ENCODE measurements at regions of chr18 and their contacts with region 1.

Region 1: GRCh38 chr18:13375302-13376255 is 157.0 kb downstream of the LDLRAD4 start:
- DNase-seq: peak; percentile 80
- H3K4me3 Mint-ChIP-seq: peak overlapping the region; percentile 74
- H3K27ac Mint-ChIP-seq: peak overlapping the region; percentile 95
- H3K4me1 Mint-ChIP-seq: peaks cover 78% of the 10 kb centered on the region
- H3K27me3 Mint-ChIP-seq: peaks cover 4% of the 10 kb centered on the region

Region 2: DNA sequence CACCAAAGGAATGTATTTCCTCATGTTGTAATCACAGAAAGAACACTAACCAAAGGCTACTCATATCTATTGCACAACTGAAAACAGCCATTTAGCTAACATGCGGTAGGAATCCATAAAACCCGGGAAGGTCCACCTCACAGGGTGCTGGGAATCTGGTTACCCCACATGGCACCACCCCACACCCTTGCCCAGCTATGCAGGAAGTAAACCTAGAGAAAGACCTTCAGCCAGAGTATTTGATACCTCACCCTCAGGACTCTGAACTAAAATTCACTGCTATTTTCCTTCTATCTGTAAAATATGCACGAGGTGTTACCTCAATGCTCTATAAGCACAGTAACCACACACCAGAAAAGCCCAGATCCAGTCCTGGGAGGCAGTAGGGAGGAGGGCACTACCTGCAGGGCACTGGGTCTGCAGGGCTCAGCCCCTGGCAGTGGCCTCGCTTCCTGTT is 537.4 kb before region 1 on chr18:
- intact Hi-C with region 1: loop called (anchors 1 kb)
- DNase-seq: peak; percentile 16
- H3K4me3 Mint-ChIP-seq: peak overlapping the region; percentile 78
- H3K27ac Mint-ChIP-seq: peak overlapping the region; percentile 92
- H3K4me1 Mint-ChIP-seq: peaks cover 78% of the 10 kb centered on the region
- H3K27me3 Mint-ChIP-seq: no peaks in the 10 kb centered on the region

Region 3: DNA sequence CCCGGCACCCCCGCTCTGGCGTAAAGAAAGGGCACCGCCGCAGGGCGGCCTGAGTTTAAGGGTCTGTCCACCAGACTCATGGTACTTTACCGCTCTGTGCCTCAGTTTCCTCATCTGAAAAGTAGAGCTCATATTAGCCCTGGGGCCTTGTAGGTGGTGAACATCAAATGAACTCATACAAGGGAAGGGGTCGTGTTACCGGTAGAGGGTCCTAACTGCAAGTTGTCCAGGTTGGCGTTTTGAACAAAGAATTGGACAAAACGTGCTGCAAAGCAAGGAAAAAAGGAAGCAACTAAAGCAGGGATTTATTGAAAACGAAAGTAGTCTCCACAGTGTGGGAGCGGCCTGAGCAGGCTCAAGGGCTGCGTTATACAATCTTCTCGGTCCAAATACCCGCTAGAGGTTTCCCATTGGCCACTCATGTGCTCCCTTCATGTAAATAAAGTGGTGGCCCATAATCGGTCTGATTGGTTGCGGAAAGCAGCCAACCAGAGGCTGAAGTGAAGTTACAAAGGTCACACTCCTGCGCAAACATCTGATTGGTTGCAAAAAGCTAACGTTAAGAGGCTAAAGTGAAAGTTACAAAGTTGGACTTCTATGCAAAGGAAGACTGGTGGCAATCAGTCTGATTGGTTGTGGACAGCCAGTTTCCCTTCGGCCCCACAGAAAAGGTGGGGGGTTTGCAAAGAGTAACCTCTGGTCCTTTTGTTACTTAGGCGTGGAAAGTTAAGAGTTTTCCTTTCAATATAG is 237.7 kb before region 1 on chr18:
- intact Hi-C with region 1: loop called (anchors 5 kb)
- DNase-seq: peak; percentile 76
- H3K4me3 Mint-ChIP-seq: peak overlapping the region; percentile 91
- H3K27ac Mint-ChIP-seq: peak overlapping the region; percentile 79
- H3K4me1 Mint-ChIP-seq: peaks cover 21% of the 10 kb centered on the region
- H3K27me3 Mint-ChIP-seq: peaks cover 11% of the 10 kb centered on the region

Region 4: GRCh38 chr18:13359210-13359609 is 16.4 kb before region 1 on chr18:
- intact Hi-C with region 1: loop called (anchors 2 kb)
- DNase-seq: no peak
- H3K4me3 Mint-ChIP-seq: no peak overlapping the region
- H3K27ac Mint-ChIP-seq: no peak overlapping the region
- H3K4me1 Mint-ChIP-seq: peaks cover 4% of the 10 kb centered on the region
- H3K27me3 Mint-ChIP-seq: no peaks in the 10 kb centered on the region

Region 5: GRCh38 chr18:13464432-13465123 is 89.0 kb after region 1 on chr18:
- intact Hi-C with region 1: loop called (anchors 2 kb)
- DNase-seq: peak; percentile 59
- H3K4me3 Mint-ChIP-seq: peak overlapping the region; percentile 90
- H3K27ac Mint-ChIP-seq: peak overlapping the region; percentile 90
- H3K4me1 Mint-ChIP-seq: peaks cover 60% of the 10 kb centered on the region
- H3K27me3 Mint-ChIP-seq: no peaks in the 10 kb centered on the region

Region 6: DNA sequence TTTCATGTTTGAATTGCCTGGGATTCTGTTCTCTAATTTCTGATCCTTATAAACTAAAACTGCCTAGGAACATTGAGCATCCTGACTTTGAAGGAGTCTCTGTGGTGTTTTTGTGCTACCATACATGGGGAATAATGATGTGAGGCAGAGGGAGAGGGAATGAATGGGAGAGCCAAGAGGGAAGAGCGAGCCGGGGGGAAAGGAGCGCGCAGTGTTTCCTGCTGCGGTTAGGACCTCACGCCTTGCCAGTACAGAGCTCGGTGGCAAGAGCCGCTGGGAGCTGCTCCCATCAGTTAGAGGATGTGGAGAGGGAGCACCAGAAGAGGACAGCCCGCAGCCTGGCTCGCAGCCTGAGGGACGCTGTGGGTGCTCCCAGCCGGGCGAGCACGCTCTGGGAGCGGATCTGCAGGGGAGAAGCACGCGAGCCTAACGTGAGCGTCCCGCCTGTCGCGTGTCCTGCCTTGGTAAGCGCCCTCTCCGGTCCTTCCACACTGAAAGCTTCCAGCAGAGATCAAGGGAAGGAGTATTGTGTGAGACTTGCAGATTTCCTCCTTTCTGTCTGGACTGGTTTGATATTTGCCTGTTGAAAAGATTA is 236.1 kb after region 1 on chr18:
- intact Hi-C with region 1: loop called (anchors 2 kb)
- DNase-seq: no peak
- H3K4me3 Mint-ChIP-seq: peak overlapping the region; percentile 80
- H3K27ac Mint-ChIP-seq: peak overlapping the region; percentile 83
- H3K4me1 Mint-ChIP-seq: peaks cover 73% of the 10 kb centered on the region
- H3K27me3 Mint-ChIP-seq: peaks cover 1% of the 10 kb centered on the region

Region 7: GRCh38 chr18:13726232-13726971 is 350.8 kb after region 1 on chr18 and contains the starts of genes FAM210A and RNMT:
- intact Hi-C with region 1: loop called (anchors 1 kb)
- DNase-seq: peak; percentile 94
- H3K4me3 Mint-ChIP-seq: peak within 1 kb of the TSS; percentile 93
- H3K27ac Mint-ChIP-seq: peak within 1 kb of the TSS; percentile 86
- H3K4me1 Mint-ChIP-seq: peaks cover 72% of the 10 kb centered on the region
- H3K27me3 Mint-ChIP-seq: no peaks in the 10 kb centered on the region
- total RNA-seq, gene FAM210A: 27.7 and 29.5 TPM in 2 replicates
- total RNA-seq, gene RNMT: 55.8 and 60.6 TPM in 2 replicates

Measured in activated T-helper 1 cell treated with anti-CD3 and anti-CD28 coated beads, Interleukin-12 subunit alpha, Interleukin-12 subunit beta, Interleukin-2, Interleukin-4 antibody, amounts not matched to agents 30 ng/mL and 10 ng/mL and 1 ng/mL, durations not matched to agents 14 hours and 24 hours and 36 hours (primary cell).